Activated CD8-positive, alpha-beta T cell treated with anti-CD3 and anti-CD28 coated beads for 36 hours (primary cell): ENCODE measurements at regions of chr20 and their contacts with region 1.

Region 1: DNA sequence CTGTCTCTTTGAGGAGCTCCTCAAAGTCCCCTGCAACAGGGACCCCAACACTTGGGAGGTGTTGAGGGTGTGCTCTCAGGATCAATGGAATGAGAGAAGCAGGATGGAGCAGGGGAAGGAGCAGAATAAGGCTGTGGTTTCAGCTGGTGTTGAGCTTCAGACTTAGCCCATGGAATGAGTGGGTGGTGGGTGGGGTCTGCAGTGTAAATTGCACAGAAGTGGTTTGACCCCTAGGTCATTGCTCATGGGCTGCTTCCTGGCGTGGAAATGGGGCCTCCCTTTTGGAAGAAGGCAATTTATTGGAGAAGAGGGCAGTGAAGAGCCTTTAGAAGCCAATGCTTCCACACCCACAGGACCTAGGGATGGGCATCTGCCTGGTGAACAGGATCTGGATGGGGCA is 37.0 kb upstream of the KCNG1 start:
- DNase-seq: peak; percentile 53
- ATAC-seq: no peak
- H3K4me3 Mint-ChIP-seq: no peak overlapping the region
- H3K27ac Mint-ChIP-seq: peak overlapping the region; percentile 12
- H3K4me1 Mint-ChIP-seq: peaks cover 52% of the 10 kb centered on the region
- H3K27me3 Mint-ChIP-seq: peaks cover 35% of the 10 kb centered on the region
- CTCF ChIP-seq: no peak

Region 2: DNA sequence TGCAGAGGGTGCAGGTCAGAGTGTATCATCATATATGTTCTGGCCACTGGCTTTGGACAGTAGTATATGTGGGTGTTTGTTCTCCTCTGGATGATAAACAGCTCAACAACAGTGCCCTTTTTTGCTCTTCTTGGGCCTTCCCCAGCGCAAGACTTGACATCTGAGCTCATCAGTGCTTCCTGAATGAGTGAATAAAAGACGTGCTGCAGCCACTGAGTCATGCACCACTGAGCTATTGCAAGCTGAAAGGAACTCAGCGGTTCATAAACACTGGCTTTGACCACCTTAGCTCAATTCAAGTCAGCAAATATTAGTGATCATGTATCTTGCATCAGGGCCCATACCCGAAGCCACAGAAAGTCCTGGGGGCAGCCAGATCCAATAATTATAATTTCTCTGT is 68.3 kb after region 1 on chr20:
- CTCF ChIA-PET with region 1: no interaction called
- POLR2A ChIA-PET with region 1: no interaction called
- intact Hi-C with region 1: loop called (anchors 10 kb)
- DNase-seq: peak; percentile 65
- ATAC-seq: peak; percentile 89
- H3K4me3 Mint-ChIP-seq: no peak overlapping the region
- H3K27ac Mint-ChIP-seq: peak overlapping the region; percentile 66
- H3K4me1 Mint-ChIP-seq: peaks cover 18% of the 10 kb centered on the region
- H3K27me3 Mint-ChIP-seq: peaks cover 16% of the 10 kb centered on the region
- CTCF ChIP-seq: no peak